ENCODE measurements at regions of chr1 and their contacts with region 1.

Region 1: DNA sequence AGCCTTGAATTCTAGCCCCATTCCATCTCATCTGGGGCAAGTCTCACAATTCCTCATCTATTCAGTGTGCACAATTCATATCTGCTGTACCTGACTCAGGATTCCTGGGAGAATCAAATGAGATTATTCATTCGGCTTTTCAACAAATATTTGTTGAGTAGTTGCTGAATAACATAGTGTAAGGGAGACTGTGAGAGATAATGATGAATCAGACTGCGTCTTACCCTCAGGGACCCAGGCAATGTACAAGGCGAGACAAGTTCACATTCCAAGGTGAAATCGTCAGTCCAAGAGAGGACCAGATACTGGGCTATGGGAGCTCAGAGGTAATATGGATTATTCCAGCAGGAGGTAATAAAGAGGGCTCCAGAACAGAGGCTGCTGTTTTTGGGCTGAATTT is 67.8 kb upstream of the SMYD2 start:
- DNase-seq: no peak
- ATAC-seq: no peak
- H3K4me3 Mint-ChIP-seq: no peak overlapping the region
- H3K27ac Mint-ChIP-seq: no peak overlapping the region
- H3K4me1 Mint-ChIP-seq: peaks cover 26% of the 10 kb centered on the region
- H3K27me3 Mint-ChIP-seq: no peaks in the 10 kb centered on the region
- CTCF ChIP-seq: no peak

Region 2: GRCh38 chr1:214116258-214116657 is 96.9 kb before region 1 on chr1:
- CTCF ChIA-PET with region 1: no interaction called
- POLR2A ChIA-PET with region 1: no interaction called
- DNase-seq: no peak
- ATAC-seq: no peak
- H3K4me3 Mint-ChIP-seq: no peak overlapping the region
- H3K27ac Mint-ChIP-seq: no peak overlapping the region
- H3K4me1 Mint-ChIP-seq: 0 out of 2 replicates have a peak, but pooled peaks cover 5% of the 10 kb centered on the region
- H3K27me3 Mint-ChIP-seq: peaks cover 9% of the 10 kb centered on the region; the same call in 1 of the 2 replicates
- CTCF ChIP-seq: no peak

Region 3: DNA sequence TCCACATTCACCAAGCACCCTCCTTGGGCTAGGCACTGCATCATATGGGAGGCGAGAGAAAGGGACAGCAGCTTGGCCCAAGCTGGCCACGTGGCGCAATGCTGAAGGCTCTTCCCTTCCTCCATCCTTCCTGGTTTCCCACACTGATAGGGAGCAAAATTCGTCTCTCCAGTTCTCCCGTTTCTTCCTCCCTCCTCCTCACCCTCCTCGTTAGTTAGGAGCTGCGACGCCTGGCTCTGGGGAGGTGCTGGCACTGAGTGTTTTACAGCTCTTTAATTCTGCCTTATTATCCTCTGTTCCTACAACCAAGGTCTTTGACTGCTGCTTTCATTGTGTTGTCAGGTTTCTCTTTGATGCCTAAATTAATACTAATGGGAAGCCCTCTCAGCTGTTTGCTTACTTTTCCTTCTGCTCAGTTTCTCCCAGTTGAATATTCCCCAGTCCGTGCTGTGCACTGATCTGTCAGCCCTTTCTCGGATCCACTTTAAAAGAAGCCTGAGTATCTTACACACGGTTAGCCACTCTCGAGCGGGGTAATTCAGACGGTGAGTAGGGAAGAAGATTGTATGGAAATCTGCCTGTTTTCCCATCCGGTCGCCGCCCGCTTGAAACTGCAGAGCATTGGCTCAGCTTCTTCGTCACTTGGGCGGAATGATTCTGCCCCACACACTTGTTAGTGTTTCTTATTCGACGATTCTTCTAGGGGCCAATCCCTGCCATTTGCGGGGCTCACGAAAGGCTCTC is 11.6 kb after region 1 on chr1:
- CTCF ChIA-PET with region 1: interaction called, 35 read pairs
- POLR2A ChIA-PET with region 1: no interaction called
- DNase-seq: no peak
- ATAC-seq: peak; percentile 85
- H3K4me3 Mint-ChIP-seq: peak overlapping the region; percentile 63
- H3K27ac Mint-ChIP-seq: no peak overlapping the region
- H3K4me1 Mint-ChIP-seq: peaks cover 27% of the 10 kb centered on the region
- H3K27me3 Mint-ChIP-seq: peaks cover 27% of the 10 kb centered on the region
- CTCF ChIP-seq: no peak

Region 4: GRCh38 chr1:214316593-214316992 is 103.5 kb after region 1 on chr1:
- CTCF ChIA-PET with region 1: interaction called, 27 read pairs
- POLR2A ChIA-PET with region 1: no interaction called
- DNase-seq: peak; percentile 63
- ATAC-seq: peak; percentile 84
- H3K4me3 Mint-ChIP-seq: peak overlapping the region; percentile 44
- H3K27ac Mint-ChIP-seq: peak overlapping the region; percentile 85
- H3K4me1 Mint-ChIP-seq: peaks cover 61% of the 10 kb centered on the region
- H3K27me3 Mint-ChIP-seq: peaks cover 82% of the 10 kb centered on the region
- CTCF ChIP-seq: no peak

Region 5: GRCh38 chr1:214397497-214397896 is 184.4 kb after region 1 on chr1:
- CTCF ChIA-PET with region 1: interaction called, 12 read pairs
- POLR2A ChIA-PET with region 1: no interaction called
- DNase-seq: no peak
- ATAC-seq: peak; percentile 58
- H3K4me3 Mint-ChIP-seq: peak overlapping the region; percentile 10; the same call in 1 of the 2 replicates
- H3K27ac Mint-ChIP-seq: peak overlapping the region; percentile 59
- H3K4me1 Mint-ChIP-seq: peaks cover 33% of the 10 kb centered on the region
- H3K27me3 Mint-ChIP-seq: no peaks in the 10 kb centered on the region
- CTCF ChIP-seq: no peak